Cardiac septum (tissue), 1 donor: ENCODE measurements at regions of chr6 and their contacts with region 1.

Region 1: DNA sequence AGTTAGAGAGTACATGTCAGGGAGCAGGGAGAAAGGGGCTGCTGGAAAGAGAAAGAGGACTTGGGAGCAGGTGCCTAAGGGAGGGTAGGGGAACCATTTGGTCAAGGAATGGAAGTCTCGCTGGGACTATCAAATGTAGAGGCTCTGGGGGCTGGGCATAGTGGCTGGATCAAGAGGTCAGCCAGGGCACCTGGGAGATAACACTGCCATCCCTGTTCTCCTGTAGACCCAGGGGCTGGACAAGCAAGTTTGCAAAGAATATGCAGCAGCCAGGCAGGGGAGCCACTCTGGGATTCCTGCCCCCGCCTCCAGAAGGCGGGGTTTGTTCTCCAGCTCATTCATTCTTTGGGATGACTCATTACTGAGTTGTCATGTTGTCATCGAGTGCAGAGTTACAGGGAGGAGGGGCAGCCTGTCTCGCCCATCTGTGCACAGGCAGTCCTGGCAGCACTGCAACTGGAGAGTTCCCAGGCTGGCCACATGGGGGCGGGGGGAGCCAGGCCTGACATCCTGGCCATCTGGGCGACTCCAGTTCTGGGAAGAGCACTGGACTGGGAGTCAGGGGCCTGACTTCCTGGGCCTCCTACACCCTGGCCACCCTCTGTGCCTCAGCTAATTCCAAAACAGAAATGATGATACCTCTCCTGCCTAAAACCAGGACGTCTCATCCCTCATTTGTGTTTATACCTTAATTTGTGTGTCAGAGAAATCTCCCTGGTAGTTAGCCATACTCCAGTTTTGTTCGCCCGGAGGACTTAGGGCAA is 28.2 kb upstream of the ZFAND3 start:
- DNase-seq: peak; percentile 95

Region 2: DNA sequence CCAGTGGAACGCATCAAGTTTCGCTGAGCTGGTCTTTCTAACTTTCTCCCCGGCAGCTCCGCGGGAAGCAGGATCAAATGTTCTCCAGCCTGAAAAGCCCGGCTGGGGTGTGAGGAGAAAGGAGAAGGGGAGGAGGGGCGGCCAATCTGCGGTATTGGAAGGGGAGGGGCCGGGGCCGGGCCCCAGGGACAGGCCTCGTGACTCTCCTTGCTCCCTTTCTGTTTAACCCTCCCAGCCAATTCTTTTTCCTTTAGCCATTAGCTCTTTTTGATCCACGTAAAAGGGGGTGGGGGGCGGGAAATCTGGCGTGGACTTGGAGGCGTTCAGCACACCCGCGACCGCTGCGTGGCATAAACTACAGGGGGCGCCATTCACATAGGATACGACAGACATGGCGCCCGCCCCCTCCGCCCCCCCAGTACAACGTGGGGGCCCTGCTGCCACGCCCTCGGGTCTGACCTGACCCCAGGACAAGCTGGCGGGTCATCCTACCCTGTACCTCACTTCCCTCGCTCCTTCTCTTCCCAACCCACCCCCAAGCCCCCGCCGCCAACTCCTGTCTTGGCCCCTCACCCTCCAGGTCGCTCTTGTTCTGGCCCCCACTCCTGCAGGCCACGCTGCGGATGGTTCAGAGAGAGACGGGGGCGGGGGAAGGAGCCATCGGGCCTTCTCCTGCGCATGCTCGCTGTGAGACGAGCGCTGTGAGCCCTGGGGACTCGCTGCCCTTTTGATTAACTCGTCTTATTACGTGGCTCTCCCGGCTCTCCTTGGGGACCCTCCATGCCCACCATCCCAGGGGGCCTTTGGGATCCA is 85.9 kb before region 1 on chr6:
- intact Hi-C with region 1: loop called (anchors 5 kb)
- DNase-seq: peak; percentile 89

Region 3: GRCh38 chr6:37860226-37860839 is 69.0 kb after region 1 on chr6:
- intact Hi-C with region 1: loop called (anchors 5 kb)
- DNase-seq: no peak

Region 4: GRCh38 chr6:38012573-38012972 is 221.2 kb after region 1 on chr6:
- intact Hi-C with region 1: loop called (anchors 5 kb)
- DNase-seq: no peak

Region 5: GRCh38 chr6:38493931-38494547 is 702.7 kb after region 1 on chr6:
- intact Hi-C with region 1: loop called (anchors 10 kb)
- DNase-seq: peak; percentile 81